Endothelial cell of umbilical vein (primary cell): ENCODE measurements at regions of chr5 and their contacts with region 1.

Region 1: DNA sequence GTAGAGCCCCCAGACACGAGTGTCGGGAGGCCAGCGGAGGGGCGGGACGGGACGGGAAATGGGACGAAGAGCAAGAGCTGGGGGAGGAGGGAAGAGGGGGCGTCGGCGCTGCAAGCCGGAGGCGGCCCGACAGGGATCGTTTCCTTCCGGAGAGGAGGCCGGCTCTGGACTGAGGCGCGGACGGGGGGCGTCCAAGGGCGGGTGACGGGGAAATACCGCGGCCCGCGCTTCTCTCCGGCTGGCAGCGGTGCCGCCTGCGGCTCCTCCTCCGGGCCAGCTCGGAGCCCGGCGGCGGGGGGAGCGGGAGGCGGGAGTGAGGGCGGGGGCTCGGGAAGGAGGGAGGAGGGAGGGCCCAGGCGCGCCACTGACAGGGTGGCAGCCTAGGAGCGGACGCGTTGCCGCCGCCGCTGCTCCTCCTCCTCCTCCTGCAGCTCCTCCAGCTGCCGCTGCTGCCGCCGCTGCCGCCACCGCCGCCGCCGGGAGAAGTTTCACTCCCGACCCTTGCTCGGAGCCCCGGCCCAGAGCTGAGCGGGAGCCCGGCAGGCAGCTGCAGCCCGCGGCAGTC is at the start of gene CHSY3:
- DNase-seq: peak; percentile 89
- H3K4me3 ChIP-seq: peak within 1 kb of the TSS; percentile 35 to 89 (median 52)
- H3K27ac ChIP-seq: peak within 1 kb of the TSS; percentile 18
- H3K4me1 ChIP-seq: peaks cover 15% of the 10 kb centered on the region
- H3K27me3 ChIP-seq: no peaks in the 10 kb centered on the region
- CTCF ChIP-seq: peak in 1 of 2 donors; percentile 10
- POLR2A ChIP-seq: peak; percentile 39
- total RNA-seq, gene CHSY3: 6.8 and 8.4 TPM in 2 replicates

Region 2: GRCh38 chr5:129836321-129836720 is 67.9 kb before region 1 on chr5:
- CTCF ChIA-PET with region 1: no interaction called
- POLR2A ChIA-PET with region 1: no interaction called
- dilution Hi-C with region 1: no loop called
- intact Hi-C with region 1: no loop called
- DNase-seq: no peak
- H3K4me3 ChIP-seq: no peak overlapping the region
- H3K27ac ChIP-seq: no peak overlapping the region
- H3K4me1 ChIP-seq: no peaks in the 10 kb centered on the region
- H3K27me3 ChIP-seq: peaks cover 0 to 3% of the 10 kb centered on the region in 2 experiments
- CTCF ChIP-seq: no peak
- POLR2A ChIP-seq: no peak

Region 3: GRCh38 chr5:130141659-130142320 is 237.6 kb after region 1 on chr5:
- CTCF ChIA-PET with region 1: interaction called, 60 read pairs
- POLR2A ChIA-PET with region 1: no interaction called
- dilution Hi-C with region 1: no loop called
- intact Hi-C with region 1: loop called (anchors 1 kb)
- DNase-seq: peak; percentile 57
- H3K4me3 ChIP-seq: no peak overlapping the region
- H3K27ac ChIP-seq: no peak overlapping the region
- H3K4me1 ChIP-seq: no peaks in the 10 kb centered on the region
- H3K27me3 ChIP-seq: no peaks in the 10 kb centered on the region
- CTCF ChIP-seq: peak; percentile 57 to 75
- POLR2A ChIP-seq: no peak

Region 4: DNA sequence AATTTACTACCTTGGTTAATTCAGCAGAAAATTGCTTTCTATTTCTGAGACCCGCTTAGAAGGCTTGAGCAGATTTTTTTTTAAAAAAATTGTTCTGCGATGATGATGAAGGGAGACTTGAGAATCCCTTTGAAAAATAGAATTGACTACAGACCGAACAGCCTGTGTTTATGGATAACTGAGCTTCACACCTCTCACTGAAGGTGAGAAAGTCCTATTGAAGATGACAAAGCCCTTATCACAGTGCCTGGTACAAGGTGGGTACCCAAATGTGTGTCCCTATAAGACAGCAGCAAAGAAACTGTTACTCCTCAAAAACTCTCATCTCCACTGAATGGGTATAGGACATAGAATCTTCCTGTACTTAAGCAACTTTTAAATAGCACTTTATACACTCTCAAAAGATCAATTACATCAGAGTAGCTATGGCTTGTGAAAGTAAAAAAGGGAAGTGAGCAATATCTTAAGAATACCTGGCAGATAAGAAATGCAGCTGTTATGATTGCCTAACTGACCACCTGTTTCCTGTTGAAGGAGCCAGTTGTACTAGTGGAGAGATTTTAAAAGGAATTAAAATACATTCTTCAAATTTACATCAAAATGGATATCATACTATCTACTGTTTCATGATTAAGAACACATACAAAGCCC is 419.7 kb after region 1 on chr5:
- CTCF ChIA-PET with region 1: no interaction called
- POLR2A ChIA-PET with region 1: no interaction called
- dilution Hi-C with region 1: no loop called
- intact Hi-C with region 1: loop called (anchors 5 kb)
- DNase-seq: peak; percentile 84
- H3K4me3 ChIP-seq: no peak overlapping the region
- H3K27ac ChIP-seq: peak overlapping the region; percentile 86
- H3K4me1 ChIP-seq: peaks cover 12% of the 10 kb centered on the region
- H3K27me3 ChIP-seq: no peaks in the 10 kb centered on the region
- CTCF ChIP-seq: no peak
- POLR2A ChIP-seq: no peak

Region 5: DNA sequence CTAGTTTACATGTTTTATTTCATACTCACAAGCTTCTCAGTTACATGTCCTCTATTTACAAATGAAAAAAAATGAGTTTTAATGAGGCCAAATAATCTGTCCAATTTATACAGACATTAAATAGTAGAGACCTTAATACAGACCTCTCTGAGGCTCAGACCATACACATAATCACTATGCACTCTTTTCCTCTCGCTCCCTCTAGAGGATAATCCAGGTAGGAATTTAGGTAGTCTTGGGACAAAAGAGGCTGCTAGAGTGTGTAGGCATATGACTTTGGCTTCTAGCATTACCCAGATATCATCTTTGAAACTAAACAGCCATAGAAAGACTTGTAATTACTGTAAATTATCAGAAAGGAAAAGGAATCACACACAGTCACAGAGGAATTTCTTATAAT is 816.2 kb after region 1 on chr5:
- CTCF ChIA-PET with region 1: interaction called, 5 read pairs
- POLR2A ChIA-PET with region 1: no interaction called
- dilution Hi-C with region 1: no loop called
- intact Hi-C with region 1: loop called (anchors 1 kb)
- DNase-seq: peak; percentile 67
- H3K4me3 ChIP-seq: no peak overlapping the region
- H3K27ac ChIP-seq: no peak overlapping the region
- H3K4me1 ChIP-seq: no peaks in the 10 kb centered on the region
- H3K27me3 ChIP-seq: peaks cover 0 to 1% of the 10 kb centered on the region in 2 experiments
- CTCF ChIP-seq: peak; percentile 9 to 54
- POLR2A ChIP-seq: no peak

Region 6: DNA sequence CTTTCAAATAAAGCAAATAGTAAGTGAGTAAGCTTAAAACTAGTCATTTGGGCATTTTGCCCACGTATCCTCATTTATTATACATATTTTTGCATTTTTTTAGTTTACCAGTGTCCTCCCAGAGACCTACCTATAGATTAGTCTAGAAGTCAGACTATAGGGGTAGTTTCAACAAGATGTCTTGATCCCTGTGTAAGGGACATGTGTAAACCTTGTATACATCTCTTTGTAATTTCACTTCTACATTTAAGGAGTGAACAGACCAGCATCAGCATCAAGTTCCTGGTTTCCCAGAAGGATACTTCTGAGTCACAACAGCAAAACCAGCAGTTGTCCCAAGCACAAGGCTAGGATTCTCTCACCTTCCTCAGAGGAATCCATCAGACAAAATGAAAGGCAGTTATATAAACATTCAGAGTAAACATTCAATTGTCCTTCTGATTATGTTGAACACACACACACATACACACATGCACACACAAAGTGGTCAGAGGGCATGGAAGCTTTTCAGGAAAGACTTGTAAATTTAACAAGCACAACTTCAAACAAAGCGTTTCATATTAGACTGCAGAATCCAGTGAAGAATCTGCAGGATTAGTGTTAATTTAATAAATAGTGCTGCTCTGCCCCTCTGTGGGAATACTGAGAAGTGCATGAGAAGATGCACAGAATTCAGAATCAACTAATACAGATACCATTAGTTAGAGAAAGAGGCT is 1205.5 kb after region 1 on chr5:
- CTCF ChIA-PET with region 1: interaction called, 13 read pairs
- POLR2A ChIA-PET with region 1: no interaction called
- dilution Hi-C with region 1: no loop called
- intact Hi-C with region 1: loop called (anchors 1 kb)
- DNase-seq: peak; percentile 52
- H3K4me3 ChIP-seq: no peak overlapping the region
- H3K27ac ChIP-seq: no peak overlapping the region
- H3K4me1 ChIP-seq: no peaks in the 10 kb centered on the region
- H3K27me3 ChIP-seq: peaks cover 0 to 2% of the 10 kb centered on the region in 2 experiments
- CTCF ChIP-seq: peak; percentile 40 to 57
- POLR2A ChIP-seq: no peak

Region 7: DNA sequence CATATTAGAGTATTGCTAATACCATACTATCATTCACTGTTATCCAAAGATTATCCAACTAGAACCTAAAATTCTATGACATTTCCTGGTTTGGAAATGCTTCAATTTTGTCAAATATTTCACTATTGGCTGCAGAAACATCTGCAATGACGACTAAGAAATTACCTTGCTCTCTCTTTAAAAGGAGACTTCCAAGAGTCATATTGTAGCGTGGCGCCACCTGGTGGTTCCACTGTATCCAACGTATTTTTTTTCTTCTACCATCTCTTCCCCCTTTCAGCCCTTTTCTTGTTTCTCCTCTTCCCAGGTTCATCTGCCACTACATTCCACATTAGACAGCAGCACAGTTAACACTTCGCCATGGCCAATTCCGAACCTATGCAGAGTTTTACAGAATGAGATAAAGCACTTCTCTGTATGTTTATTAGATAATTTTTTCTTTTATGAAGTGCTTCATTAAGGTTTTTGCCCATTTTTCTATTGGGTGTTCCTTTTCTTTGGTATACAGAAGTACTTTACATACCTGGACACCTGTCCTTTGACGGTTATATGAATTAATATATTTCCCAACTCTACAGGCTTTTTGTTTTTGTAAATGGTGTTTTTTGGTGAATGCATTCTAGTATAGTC is 1513.2 kb after region 1 on chr5:
- CTCF ChIA-PET with region 1: interaction called, 6 read pairs
- POLR2A ChIA-PET with region 1: no interaction called
- dilution Hi-C with region 1: no loop called
- intact Hi-C with region 1: loop called (anchors 1 kb)
- DNase-seq: peak; percentile 79
- H3K4me3 ChIP-seq: no peak overlapping the region
- H3K27ac ChIP-seq: no peak overlapping the region
- H3K4me1 ChIP-seq: no peaks in the 10 kb centered on the region
- H3K27me3 ChIP-seq: no peaks in the 10 kb centered on the region
- CTCF ChIP-seq: peak; percentile 60 to 64
- POLR2A ChIP-seq: no peak